ENCODE measurements at regions of chr4 and their contacts with region 1.

Region 1: GRCh38 chr4:37891260-37892159 is 626 bp downstream of the TBC1D1 start:
- DNase-seq: peak; percentile 53
- H3K4me3 Mint-ChIP-seq: peak overlapping the region; percentile 93
- H3K27ac Mint-ChIP-seq: peak overlapping the region; percentile 95
- H3K4me1 Mint-ChIP-seq: peaks cover 48% of the 10 kb centered on the region
- H3K27me3 Mint-ChIP-seq: peaks cover 19% of the 10 kb centered on the region

Region 2: GRCh38 chr4:37802068-37802666 is 89.3 kb before region 1 on chr4:
- intact Hi-C with region 1: loop called (anchors 1 kb)
- DNase-seq: no peak
- H3K4me3 Mint-ChIP-seq: no peak overlapping the region
- H3K27ac Mint-ChIP-seq: no peak overlapping the region
- H3K4me1 Mint-ChIP-seq: no peaks in the 10 kb centered on the region
- H3K27me3 Mint-ChIP-seq: peaks cover 6% of the 10 kb centered on the region

Region 3: GRCh38 chr4:37847311-37847884 is 44.1 kb before region 1 on chr4:
- intact Hi-C with region 1: no loop called
- DNase-seq: no peak
- H3K4me3 Mint-ChIP-seq: no peak overlapping the region
- H3K27ac Mint-ChIP-seq: no peak overlapping the region
- H3K4me1 Mint-ChIP-seq: no peaks in the 10 kb centered on the region
- H3K27me3 Mint-ChIP-seq: no peaks in the 10 kb centered on the region

Region 4: DNA sequence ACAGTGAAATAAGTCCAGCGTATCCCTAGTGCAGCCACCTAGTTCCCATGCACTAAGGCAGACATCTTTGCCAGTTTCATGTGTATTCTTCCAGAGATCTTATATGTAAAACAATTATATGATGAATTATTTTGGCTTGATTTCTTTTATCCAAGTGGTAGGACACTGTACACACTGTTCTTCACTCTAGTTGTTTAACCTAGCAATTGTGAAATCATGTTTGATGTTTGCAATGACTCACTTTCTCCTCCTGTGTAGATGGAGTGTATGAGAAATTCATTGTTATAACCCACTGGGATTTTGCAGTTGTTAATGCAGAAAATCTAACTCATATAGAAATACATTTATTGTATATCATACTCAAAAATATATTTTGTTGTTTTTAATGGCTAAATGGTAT is 18.1 kb before region 1 on chr4:
- intact Hi-C with region 1: loop called (anchors 1 kb)
- DNase-seq: no peak
- H3K4me3 Mint-ChIP-seq: no peak overlapping the region
- H3K27ac Mint-ChIP-seq: no peak overlapping the region
- H3K4me1 Mint-ChIP-seq: peaks cover 21% of the 10 kb centered on the region
- H3K27me3 Mint-ChIP-seq: no peaks in the 10 kb centered on the region

Region 5: DNA sequence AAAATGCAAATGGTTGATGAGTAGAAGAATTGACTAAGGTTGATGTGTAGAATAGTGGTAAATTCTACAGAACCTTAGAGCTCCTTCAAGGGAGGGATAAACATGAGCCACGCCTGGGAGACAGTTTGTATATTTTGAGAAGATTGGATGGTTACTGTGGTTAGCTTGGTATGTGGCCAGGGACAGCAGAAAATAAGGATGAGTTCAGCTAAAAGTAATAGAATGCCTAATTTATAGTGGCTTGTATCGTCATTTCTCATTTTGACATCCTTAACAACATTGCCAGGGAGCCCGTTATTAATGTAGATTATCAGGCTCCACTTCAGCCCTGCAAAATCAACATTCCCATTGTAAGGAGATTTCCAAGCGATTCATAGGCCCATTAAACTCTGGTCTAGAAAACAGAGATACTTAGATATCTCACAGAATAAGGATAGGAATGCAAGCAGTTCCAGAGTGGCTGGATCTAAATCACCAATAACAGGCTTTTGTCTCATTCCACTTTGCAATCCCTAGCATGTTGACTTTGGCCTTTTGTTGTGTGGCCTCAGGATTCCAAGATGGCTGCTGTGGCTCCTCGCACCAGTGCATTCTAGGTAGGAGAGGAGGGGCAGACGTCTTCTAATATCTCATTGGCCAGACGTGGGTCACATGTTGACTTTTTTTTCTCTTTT is 62.2 kb after region 1 on chr4:
- intact Hi-C with region 1: loop called (anchors 1 kb)
- DNase-seq: no peak
- H3K4me3 Mint-ChIP-seq: no peak overlapping the region
- H3K27ac Mint-ChIP-seq: no peak overlapping the region
- H3K4me1 Mint-ChIP-seq: peaks cover 8% of the 10 kb centered on the region
- H3K27me3 Mint-ChIP-seq: no peaks in the 10 kb centered on the region

Region 6: DNA sequence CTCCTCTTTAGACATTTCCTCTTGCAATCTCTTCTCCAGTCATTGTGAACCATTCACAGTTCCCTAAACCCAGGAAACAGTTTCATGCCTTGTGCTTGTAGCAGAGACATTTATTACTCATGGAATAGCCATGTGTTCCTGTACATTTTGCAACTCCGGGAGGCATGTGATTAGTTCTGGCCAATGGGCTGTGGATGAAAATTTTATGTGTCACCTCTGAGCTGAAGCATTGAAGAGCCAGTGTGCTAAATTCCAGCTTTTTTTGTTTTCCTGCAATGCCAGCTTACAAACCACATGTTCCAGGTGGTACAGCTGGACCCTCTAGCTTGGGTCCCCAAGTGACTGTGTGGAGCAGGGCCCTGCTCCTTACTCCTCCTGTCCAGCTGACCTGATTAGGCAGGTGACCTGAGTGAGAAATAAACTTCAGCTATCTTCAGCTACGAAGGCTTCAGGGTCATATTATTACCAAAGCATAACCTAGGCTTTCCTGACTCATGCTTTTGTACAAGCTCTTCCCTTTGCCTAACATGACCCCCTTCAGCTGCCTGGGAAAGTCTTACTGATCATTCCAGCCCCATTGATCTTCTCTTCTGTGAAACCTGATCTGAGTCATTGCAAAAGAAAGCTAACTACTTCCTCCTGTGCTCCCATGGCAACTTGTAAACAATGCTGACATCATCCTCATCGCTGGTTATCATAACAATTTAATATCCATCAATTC is 269.1 kb after region 1 on chr4:
- intact Hi-C with region 1: loop called (anchors 5 kb)
- DNase-seq: peak; percentile 66
- H3K4me3 Mint-ChIP-seq: peak overlapping the region; percentile 51
- H3K27ac Mint-ChIP-seq: peak overlapping the region; percentile 90
- H3K4me1 Mint-ChIP-seq: peaks cover 80% of the 10 kb centered on the region
- H3K27me3 Mint-ChIP-seq: peaks cover 7% of the 10 kb centered on the region

Measured in activated T-helper 1 cell treated with anti-CD3 and anti-CD28 coated beads, Interleukin-12 subunit alpha, Interleukin-12 subunit beta, Interleukin-2, Interleukin-4 antibody, amounts not matched to agents 30 ng/mL and 10 ng/mL and 1 ng/mL, durations not matched to agents 14 hours and 24 hours and 36 hours (primary cell).